ENCODE measurements at regions of chr2 and their contacts with region 1.

Region 1: GRCh38 chr2:237674731-237675276 is 47.4 kb downstream of the LRRFIP1 start:
- DNase-seq: peak; percentile 88
- H3K4me3 Mint-ChIP-seq: peak overlapping the region; percentile 78
- H3K27ac Mint-ChIP-seq: peak overlapping the region; percentile 86
- H3K4me1 Mint-ChIP-seq: peaks cover 44% of the 10 kb centered on the region
- H3K27me3 Mint-ChIP-seq: no peaks in the 10 kb centered on the region

Region 2: GRCh38 chr2:237441605-237442274 is 233.1 kb before region 1 on chr2:
- CTCF ChIA-PET with region 1: no interaction called
- POLR2A ChIA-PET with region 1: no interaction called
- intact Hi-C with region 1: loop called (anchors 2 kb)
- DNase-seq: peak; percentile 69
- H3K4me3 Mint-ChIP-seq: peak overlapping the region; percentile 40
- H3K27ac Mint-ChIP-seq: peak overlapping the region; percentile 98
- H3K4me1 Mint-ChIP-seq: peaks cover 73% of the 10 kb centered on the region
- H3K27me3 Mint-ChIP-seq: peaks cover 2% of the 10 kb centered on the region

Region 3: DNA sequence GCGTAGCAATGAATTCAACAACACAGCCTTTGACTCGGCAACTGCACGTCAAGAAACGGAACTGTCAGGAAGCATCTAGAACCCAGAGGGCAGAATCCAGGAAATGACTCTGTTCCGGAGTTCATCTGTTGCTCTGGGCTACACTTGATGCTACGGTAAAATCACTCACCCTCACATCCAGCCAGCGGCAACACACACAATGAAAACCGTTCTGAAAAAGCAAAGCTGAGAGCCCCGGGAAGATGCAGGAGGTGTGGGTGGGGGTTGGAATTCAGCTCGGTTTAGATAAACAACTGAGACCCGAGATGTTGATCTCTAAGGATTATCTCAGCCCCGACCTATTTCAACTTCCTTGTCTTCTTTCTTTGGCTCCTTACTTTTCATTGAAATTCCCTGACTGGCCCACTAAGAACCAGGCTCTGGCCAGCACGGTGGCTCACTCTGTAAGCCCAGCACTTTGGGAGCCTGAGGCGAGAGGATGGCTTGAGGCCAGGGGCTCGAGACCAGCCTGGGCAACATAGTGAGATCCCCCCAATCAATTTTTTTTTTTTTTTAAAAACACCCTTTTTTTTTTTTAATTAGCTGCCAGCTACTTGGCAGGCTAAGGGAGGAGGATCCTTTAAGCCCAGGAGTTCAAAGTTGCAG is 71.0 kb before region 1 on chr2:
- CTCF ChIA-PET with region 1: interaction called, 3 read pairs
- POLR2A ChIA-PET with region 1: no interaction called
- intact Hi-C with region 1: loop called (anchors 5 kb)
- DNase-seq: peak; percentile 72
- H3K4me3 Mint-ChIP-seq: peak overlapping the region; percentile 7
- H3K27ac Mint-ChIP-seq: peak overlapping the region; percentile 42
- H3K4me1 Mint-ChIP-seq: peaks cover 18% of the 10 kb centered on the region
- H3K27me3 Mint-ChIP-seq: no peaks in the 10 kb centered on the region

Region 4: DNA sequence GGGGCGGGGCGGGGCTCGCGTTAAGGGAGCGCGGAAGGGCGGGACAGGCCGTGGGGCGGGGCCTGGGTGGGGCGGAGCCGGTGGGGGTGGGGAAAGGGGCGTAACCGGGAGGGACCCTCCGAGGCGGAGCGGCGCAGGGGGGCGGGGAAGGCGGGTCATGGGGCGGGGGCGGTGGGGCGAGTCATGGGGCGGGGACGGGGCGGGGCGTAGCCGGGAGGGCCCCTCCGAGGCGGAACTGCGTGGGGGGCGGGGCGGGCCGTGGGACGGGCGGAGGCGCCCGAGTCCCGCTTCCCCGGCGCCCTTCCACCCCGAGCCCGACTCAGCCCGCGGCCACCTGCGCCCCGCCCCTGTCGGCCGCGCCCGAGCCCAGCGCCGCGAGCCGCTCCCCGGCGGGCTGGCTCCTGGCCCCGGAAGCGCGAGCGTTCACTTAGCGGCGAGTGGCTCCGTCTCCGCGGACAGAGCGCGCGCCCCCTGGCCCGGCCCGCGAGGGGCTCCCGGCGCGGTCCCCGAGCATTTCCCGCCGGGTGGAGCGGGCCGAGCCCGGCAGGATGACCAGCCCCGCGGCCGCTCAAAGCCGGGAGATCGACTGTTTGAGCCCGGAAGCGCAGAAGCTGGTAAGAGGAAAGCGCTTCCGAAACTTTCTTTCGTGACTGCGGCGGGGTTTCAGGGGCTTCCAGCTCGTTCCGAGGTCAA is 17.2 kb after region 1 on chr2:
- CTCF ChIA-PET with region 1: interaction called, 99 read pairs
- POLR2A ChIA-PET with region 1: interaction called, 169 read pairs
- intact Hi-C with region 1: loop called (anchors 1 kb)
- DNase-seq: peak; percentile 96
- H3K4me3 Mint-ChIP-seq: peak overlapping the region; percentile 98
- H3K27ac Mint-ChIP-seq: peak overlapping the region; percentile 99
- H3K4me1 Mint-ChIP-seq: peaks cover 62% of the 10 kb centered on the region
- H3K27me3 Mint-ChIP-seq: no peaks in the 10 kb centered on the region

Region 5: DNA sequence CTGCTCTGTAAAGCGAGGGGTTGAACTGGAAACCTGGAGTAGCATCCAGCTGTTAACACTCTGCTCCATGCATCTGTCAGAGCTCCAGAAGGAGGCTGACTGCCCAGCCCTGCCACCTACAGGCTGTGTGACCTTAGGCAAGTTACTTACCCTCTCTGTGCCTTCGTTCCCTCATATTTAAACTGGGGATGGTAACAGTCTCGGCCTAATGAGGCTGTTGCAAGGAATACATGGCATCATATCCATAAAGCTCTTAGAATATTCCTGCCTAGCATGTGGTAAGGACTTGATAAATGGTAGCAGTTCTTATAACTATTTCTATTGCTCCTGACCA is 33.2 kb after region 1 on chr2:
- CTCF ChIA-PET with region 1: interaction called, 64 read pairs
- POLR2A ChIA-PET with region 1: interaction called, 18 read pairs
- intact Hi-C with region 1: no loop called
- DNase-seq: no peak
- H3K4me3 Mint-ChIP-seq: no peak overlapping the region
- H3K27ac Mint-ChIP-seq: no peak overlapping the region
- H3K4me1 Mint-ChIP-seq: peaks cover 63% of the 10 kb centered on the region
- H3K27me3 Mint-ChIP-seq: no peaks in the 10 kb centered on the region

Region 6: GRCh38 chr2:237744613-237745249 is 69.9 kb after region 1 on chr2:
- CTCF ChIA-PET with region 1: interaction called, 192 read pairs
- POLR2A ChIA-PET with region 1: no interaction called
- intact Hi-C with region 1: loop called (anchors 1 kb)
- DNase-seq: peak; percentile 86
- H3K4me3 Mint-ChIP-seq: no peak overlapping the region
- H3K27ac Mint-ChIP-seq: peak overlapping the region; percentile 76
- H3K4me1 Mint-ChIP-seq: peaks cover 39% of the 10 kb centered on the region
- H3K27me3 Mint-ChIP-seq: no peaks in the 10 kb centered on the region

Region 7: DNA sequence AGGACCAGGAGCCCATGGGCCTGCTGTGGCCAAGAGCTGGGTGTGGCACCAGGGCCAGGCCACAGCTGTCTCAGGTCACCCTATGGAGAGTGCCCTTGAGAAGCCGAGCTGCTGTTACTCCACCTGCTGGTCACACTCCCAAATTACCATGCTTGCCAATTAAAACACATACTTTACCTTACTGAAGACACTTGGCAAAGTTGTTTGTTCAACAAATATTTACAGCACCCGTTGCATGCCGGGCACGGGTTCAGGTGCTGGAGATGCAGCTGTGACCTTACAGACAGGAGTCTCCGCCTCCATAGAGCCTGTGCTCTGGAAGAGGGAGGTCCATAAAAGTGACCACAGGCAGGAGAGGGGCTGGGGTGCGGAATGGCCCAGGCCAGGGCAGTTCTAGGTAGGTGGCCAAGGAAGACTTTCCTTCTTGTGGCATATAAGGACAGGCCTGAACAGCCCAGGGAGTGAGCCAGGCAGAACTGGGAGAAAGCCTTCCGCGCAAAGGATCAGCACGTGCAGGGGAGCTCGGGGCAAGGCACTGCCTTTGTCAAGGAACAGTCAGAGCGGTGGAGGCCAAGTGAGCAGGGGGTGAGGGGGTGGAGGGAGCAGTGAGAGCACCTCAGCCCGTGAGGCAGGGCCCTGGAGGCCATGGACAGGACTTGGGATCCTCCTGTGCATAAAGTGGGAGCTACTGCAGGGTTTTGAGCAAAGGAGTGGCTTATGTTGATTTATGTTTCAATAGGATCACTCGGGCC is 100.2 kb after region 1 on chr2:
- CTCF ChIA-PET with region 1: interaction called, 30 read pairs
- POLR2A ChIA-PET with region 1: interaction called, 3 read pairs
- intact Hi-C with region 1: loop called (anchors 1 kb)
- DNase-seq: peak; percentile 62
- H3K4me3 Mint-ChIP-seq: no peak overlapping the region
- H3K27ac Mint-ChIP-seq: no peak overlapping the region
- H3K4me1 Mint-ChIP-seq: no peaks in the 10 kb centered on the region
- H3K27me3 Mint-ChIP-seq: no peaks in the 10 kb centered on the region

Region 8: GRCh38 chr2:237798236-237799059 is 123.6 kb after region 1 on chr2 and contains the start of gene RBM44:
- CTCF ChIA-PET with region 1: no interaction called
- POLR2A ChIA-PET with region 1: no interaction called
- intact Hi-C with region 1: no loop called
- DNase-seq: no peak
- H3K4me3 Mint-ChIP-seq: no peak within 1 kb of the TSS
- H3K27ac Mint-ChIP-seq: no peak within 1 kb of the TSS
- H3K4me1 Mint-ChIP-seq: no peaks in the 10 kb centered on the region
- H3K27me3 Mint-ChIP-seq: no peaks in the 10 kb centered on the region
- total RNA-seq, gene RBM44: 0.69 to 0.75 TPM

Measured in activated CD4-positive, alpha-beta memory T cell treated with anti-CD3 and anti-CD28 coated beads for 36 hours (primary cell).